ENCODE measurements at regions of chr21 and their contacts with region 1.

Region 1: GRCh38 chr21:35840197-35840799 is 220.0 kb downstream of the SETD4 start:
- DNase-seq: peak; percentile 56
- ATAC-seq: peak; percentile 39
- H3K4me3 Mint-ChIP-seq: no peak overlapping the region
- H3K27ac Mint-ChIP-seq: no peak overlapping the region
- H3K4me1 Mint-ChIP-seq: no peaks in the 10 kb centered on the region
- H3K27me3 Mint-ChIP-seq: peaks cover 14% of the 10 kb centered on the region

Region 2: GRCh38 chr21:34745557-34746255 is 1094.6 kb before region 1 on chr21:
- CTCF ChIA-PET with region 1: interaction called, 26 read pairs
- DNase-seq: peak; percentile 66
- ATAC-seq: peak; percentile 81
- H3K4me3 Mint-ChIP-seq: no peak overlapping the region
- H3K27ac Mint-ChIP-seq: no peak overlapping the region
- H3K4me1 Mint-ChIP-seq: peaks cover 4% of the 10 kb centered on the region
- H3K27me3 Mint-ChIP-seq: peaks cover 28% of the 10 kb centered on the region

Region 3: GRCh38 chr21:36028127-36029069 is 188.1 kb after region 1 on chr21:
- CTCF ChIA-PET with region 1: interaction called, 10 read pairs
- DNase-seq: peak; percentile 75
- ATAC-seq: peak; percentile 85
- H3K4me3 Mint-ChIP-seq: no peak overlapping the region
- H3K27ac Mint-ChIP-seq: no peak overlapping the region
- H3K4me1 Mint-ChIP-seq: peaks cover 5% of the 10 kb centered on the region
- H3K27me3 Mint-ChIP-seq: no peaks in the 10 kb centered on the region

Measured in activated CD8-positive, alpha-beta memory T cell treated with anti-CD3 and anti-CD28 coated beads, Interleukin-2, amount 10 ng/mL, durations not matched to agents 7 days and 5 days (primary cell).